SK-N-SH (cell line): ENCODE measurements at regions of chr7 and their contacts with region 1.

Region 1: DNA sequence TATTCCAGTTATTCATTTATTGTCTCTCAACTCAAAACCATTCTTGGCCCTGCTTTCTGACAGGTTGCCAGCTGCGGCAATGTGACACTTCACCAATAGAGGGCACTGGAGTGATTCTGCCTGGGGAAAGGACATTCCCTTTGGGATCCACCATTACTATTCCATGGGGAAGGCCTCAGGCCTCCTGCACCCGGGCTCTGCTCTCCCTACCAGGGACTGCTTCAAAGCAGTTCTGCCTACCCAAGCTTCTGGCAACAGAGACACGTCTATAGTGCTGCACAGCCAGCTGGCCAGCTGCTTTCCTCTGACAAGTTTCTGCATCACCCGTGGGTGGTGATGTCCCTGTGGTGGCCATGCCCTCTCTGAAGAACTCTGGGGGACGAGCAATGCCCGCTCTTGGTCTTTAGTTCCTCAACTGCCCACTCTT is 163.8 kb downstream of the ELMO1 start:
- DNase-seq: peak; percentile 72
- H3K4me3 ChIP-seq: no peak overlapping the region
- H3K27ac ChIP-seq: no peak overlapping the region
- H3K4me1 ChIP-seq: peaks cover 0 to 44% of the 10 kb centered on the region in 2 experiments; a peak in 2 of 4 replicates
- H3K27me3 ChIP-seq: no peaks in the 10 kb centered on the region
- CTCF ChIP-seq: peak; percentile 36; the same call in 1 of the 2 replicates
- EP300 ChIP-seq: no peak
- RAD21 ChIP-seq: peak; percentile 89

Region 2: GRCh38 chr7:37269711-37270508 is 14.9 kb before region 1 on chr7:
- CTCF ChIA-PET with region 1: interaction called, 14 read pairs
- POLR2A ChIA-PET with region 1: no interaction called
- DNase-seq: no peak
- H3K4me3 ChIP-seq: no peak overlapping the region
- H3K27ac ChIP-seq: no peak overlapping the region
- H3K4me1 ChIP-seq: no peaks in the 10 kb centered on the region
- H3K27me3 ChIP-seq: no peaks in the 10 kb centered on the region
- CTCF ChIP-seq: no peak
- EP300 ChIP-seq: no peak
- RAD21 ChIP-seq: no peak

Region 3: DNA sequence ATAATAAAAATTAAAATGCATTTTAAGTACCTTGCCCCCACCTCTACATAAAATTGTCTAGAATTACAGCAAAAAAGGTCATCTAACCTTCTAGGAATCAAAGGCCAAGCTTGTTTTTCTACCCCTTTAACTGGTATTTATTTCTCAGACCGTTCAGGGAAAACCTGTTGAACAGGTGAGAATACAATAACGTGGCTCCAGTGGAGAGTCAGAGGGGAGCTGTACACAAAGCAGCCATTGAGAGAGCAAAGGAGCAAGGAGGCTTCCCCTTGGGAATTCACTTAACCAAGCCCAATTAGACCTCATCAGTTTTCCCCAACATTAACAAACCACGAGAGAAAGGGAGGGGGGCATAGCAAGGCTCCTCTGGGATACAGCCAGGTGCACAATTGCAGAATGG is 61.9 kb after region 1 on chr7:
- CTCF ChIA-PET with region 1: interaction called, 10 read pairs
- POLR2A ChIA-PET with region 1: interaction called, 3 read pairs
- DNase-seq: no peak
- H3K4me3 ChIP-seq: no peak overlapping the region
- H3K27ac ChIP-seq: no peak overlapping the region
- H3K4me1 ChIP-seq: peaks cover 0 to 12% of the 10 kb centered on the region in 2 experiments; a peak in 1 of 4 replicates
- H3K27me3 ChIP-seq: no peaks in the 10 kb centered on the region
- CTCF ChIP-seq: no peak
- EP300 ChIP-seq: no peak
- RAD21 ChIP-seq: no peak

Region 4: DNA sequence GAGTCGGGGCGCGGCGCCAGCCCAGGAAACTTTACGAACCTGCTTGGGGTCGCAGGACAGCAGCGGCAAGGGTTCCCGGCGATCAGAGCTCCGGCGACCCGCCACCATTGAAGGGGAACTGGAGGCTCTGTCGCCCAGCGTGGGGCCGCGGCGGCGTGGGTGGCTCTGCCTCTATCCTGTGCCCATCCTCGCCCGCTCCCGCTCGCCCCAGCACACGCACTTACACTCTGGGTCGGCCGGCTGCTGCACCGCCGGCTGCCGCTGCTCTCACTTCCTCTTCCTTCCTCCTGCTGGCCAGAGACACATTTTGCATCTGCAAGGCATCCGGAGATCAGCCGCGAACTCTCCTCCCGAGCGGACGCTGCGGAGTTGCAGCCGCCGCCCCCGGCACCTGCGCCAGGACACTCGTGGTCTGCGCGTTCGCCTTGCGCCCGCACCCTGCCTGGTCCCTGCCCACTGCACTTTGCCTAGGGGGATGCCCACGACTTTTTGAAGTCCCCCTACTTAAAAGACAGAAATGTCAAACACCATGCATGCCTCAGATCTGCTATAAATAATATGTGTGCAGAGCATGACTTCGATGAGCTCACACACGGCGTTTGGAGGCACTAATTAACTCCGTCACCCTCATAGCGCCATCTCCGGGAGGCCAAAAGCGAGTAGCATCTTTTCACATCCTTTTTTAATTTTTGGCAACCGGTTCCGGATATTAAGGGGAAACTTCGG is 164.0 kb after region 1 on chr7 and contains the start of gene ELMO1:
- CTCF ChIA-PET with region 1: interaction called, 40 read pairs
- POLR2A ChIA-PET with region 1: interaction called, 3 read pairs
- DNase-seq: peak; percentile 94
- H3K4me3 ChIP-seq: peak within 1 kb of the TSS in 1 of 2 experiments; percentile 55; a peak in 2 of 4 replicates
- H3K27ac ChIP-seq: peak within 1 kb of the TSS in 1 of 2 experiments; percentile 73; a peak in 2 of 4 replicates
- H3K4me1 ChIP-seq: peaks cover 0 to 13% of the 10 kb centered on the region in 2 experiments; a peak in 2 of 4 replicates
- H3K27me3 ChIP-seq: no peaks in the 10 kb centered on the region
- CTCF ChIP-seq: no peak
- EP300 ChIP-seq: no peak; a peak in 1 of 4 replicates
- RAD21 ChIP-seq: peak; percentile 52
- polyA plus RNA-seq, gene ELMO1: 0.64 and 2.8 TPM in 2 replicates

Region 5: GRCh38 chr7:37504801-37505200 is 220.0 kb after region 1 on chr7:
- CTCF ChIA-PET with region 1: interaction called, 42 read pairs
- POLR2A ChIA-PET with region 1: no interaction called
- DNase-seq: no peak
- H3K4me3 ChIP-seq: no peak overlapping the region
- H3K27ac ChIP-seq: no peak overlapping the region
- H3K4me1 ChIP-seq: no peaks in the 10 kb centered on the region; a peak in 1 of 4 replicates
- H3K27me3 ChIP-seq: no peaks in the 10 kb centered on the region
- CTCF ChIP-seq: no peak
- EP300 ChIP-seq: no peak
- RAD21 ChIP-seq: no peak

Region 6: GRCh38 chr7:37510043-37510634 is 225.3 kb after region 1 on chr7:
- CTCF ChIA-PET with region 1: interaction called, 25 read pairs
- POLR2A ChIA-PET with region 1: no interaction called
- DNase-seq: peak; percentile 40
- H3K4me3 ChIP-seq: no peak overlapping the region
- H3K27ac ChIP-seq: no peak overlapping the region
- H3K4me1 ChIP-seq: no peaks in the 10 kb centered on the region; a peak in 1 of 4 replicates
- H3K27me3 ChIP-seq: no peaks in the 10 kb centered on the region
- CTCF ChIP-seq: peak; percentile 34
- EP300 ChIP-seq: no peak
- RAD21 ChIP-seq: peak; percentile 80

Region 7: GRCh38 chr7:37577412-37577811 is 292.6 kb after region 1 on chr7:
- CTCF ChIA-PET with region 1: no interaction called
- POLR2A ChIA-PET with region 1: no interaction called
- DNase-seq: no peak
- H3K4me3 ChIP-seq: no peak overlapping the region
- H3K27ac ChIP-seq: no peak overlapping the region
- H3K4me1 ChIP-seq: peaks cover 0 to 3% of the 10 kb centered on the region in 2 experiments; a peak in 2 of 4 replicates
- H3K27me3 ChIP-seq: no peaks in the 10 kb centered on the region
- CTCF ChIP-seq: no peak
- EP300 ChIP-seq: no peak
- RAD21 ChIP-seq: no peak